AG04449 (cell line): ENCODE measurements at regions of chr17 and their contacts with region 1.

Region 1: GRCh38 chr17:30824356-30825145 is at the start of gene CRLF3:
- DNase-seq: peak; percentile 12
- H3K4me3 ChIP-seq: peak within 1 kb of the TSS; percentile 86
- CTCF ChIP-seq: peak; percentile 49

Region 2: GRCh38 chr17:29048440-29049368 is 1775.8 kb before region 1 on chr17:
- CTCF ChIA-PET with region 1: no interaction called
- POLR2A ChIA-PET with region 1: no interaction called
- DNase-seq: no peak
- H3K4me3 ChIP-seq: no peak overlapping the region
- CTCF ChIP-seq: no peak

Region 3: DNA sequence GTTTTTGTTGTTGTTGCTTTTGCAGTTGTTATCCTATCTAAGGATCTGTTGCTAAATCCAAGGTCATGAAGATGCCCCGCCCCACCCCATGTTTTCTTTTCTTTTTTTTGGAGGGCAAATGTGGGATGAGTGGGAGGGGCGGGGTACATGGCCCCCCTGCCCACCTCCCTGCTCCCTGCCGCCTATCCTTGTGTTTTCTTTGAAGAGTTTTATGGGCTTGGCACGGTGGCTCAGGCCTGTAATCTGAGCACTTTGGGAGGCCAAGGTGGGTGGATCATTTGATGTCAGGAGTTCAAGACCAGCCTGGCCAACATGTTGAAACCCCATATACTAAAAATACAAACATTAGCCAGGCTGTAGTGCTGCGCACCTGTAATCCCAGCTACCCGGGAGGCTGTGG is 366.2 kb before region 1 on chr17:
- CTCF ChIA-PET with region 1: no interaction called
- POLR2A ChIA-PET with region 1: no interaction called
- DNase-seq: no peak
- H3K4me3 ChIP-seq: no peak overlapping the region
- CTCF ChIP-seq: no peak

Region 4: DNA sequence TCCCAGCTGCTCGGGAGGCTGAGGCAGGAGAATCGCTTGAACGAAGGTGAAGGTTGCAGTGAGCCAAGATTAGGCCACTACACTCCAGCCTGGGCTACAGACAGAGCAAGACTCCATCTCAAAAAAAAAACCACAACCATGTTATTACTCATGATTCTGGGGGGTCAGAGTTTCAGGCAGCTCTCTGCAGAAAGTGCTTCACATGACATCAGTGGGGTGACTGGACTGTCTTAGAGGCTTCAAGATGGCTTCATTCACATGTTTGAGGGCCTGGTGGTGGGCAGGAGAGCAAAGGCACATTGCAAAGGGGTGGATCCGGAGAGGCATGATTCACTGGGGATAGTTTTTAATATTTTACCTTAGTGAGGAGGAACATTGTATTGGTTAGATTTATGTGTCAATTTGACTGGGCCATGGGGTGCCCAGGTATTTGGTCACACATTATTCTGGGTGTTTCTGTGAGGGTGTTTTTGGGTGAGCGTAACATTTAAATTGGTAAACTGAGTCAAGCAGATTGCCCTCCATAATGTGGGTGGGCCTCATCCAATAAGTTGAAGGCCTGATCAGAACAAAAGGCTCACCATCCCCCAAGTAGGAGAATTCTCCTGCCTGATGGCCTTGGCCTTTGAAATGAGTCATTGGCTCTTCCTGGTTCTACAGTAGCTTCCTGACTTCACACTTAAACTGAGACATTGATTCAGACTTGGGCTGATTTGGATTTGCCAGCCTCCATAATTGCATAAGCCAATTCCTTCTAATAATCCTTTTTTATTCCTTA is 237.5 kb before region 1 on chr17:
- CTCF ChIA-PET with region 1: no interaction called
- POLR2A ChIA-PET with region 1: no interaction called
- DNase-seq: peak; percentile 49
- H3K4me3 ChIP-seq: no peak overlapping the region
- CTCF ChIP-seq: no peak

Region 5: DNA sequence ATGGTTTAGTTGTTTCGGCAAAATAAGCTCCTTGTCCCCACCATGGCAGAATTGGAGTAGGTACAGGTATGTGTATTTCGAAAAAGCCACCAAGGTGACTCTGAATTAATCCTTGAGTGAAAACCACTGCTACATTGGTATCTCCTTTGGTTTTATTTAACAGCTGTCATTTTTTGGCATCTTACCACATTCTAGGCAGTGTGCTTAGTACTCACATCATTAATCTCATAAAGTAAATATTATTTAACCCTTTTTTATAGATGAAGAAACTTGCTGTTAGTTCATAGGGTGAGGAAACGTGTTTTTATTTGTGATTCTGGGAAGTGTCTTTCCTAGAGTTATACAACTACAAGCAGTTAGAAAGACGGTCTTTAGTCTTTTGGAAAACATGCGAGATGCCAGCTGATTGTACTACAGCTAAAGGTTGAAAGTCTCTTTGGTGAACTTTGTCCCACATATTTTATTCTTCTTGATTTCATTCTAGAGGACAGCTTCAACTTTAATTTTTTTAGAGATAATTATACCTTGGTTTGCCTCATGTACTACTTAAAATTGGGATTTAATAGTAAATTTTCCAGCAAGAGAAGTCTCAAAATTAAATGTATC is 13.8 kb after region 1 on chr17:
- CTCF ChIA-PET with region 1: interaction called, 18 read pairs
- POLR2A ChIA-PET with region 1: interaction called, 3 read pairs
- DNase-seq: no peak
- H3K4me3 ChIP-seq: no peak overlapping the region
- CTCF ChIP-seq: no peak